OCI-LY7 (cell line): ENCODE measurements at regions of chr6 and their contacts with region 1.

Region 1: DNA sequence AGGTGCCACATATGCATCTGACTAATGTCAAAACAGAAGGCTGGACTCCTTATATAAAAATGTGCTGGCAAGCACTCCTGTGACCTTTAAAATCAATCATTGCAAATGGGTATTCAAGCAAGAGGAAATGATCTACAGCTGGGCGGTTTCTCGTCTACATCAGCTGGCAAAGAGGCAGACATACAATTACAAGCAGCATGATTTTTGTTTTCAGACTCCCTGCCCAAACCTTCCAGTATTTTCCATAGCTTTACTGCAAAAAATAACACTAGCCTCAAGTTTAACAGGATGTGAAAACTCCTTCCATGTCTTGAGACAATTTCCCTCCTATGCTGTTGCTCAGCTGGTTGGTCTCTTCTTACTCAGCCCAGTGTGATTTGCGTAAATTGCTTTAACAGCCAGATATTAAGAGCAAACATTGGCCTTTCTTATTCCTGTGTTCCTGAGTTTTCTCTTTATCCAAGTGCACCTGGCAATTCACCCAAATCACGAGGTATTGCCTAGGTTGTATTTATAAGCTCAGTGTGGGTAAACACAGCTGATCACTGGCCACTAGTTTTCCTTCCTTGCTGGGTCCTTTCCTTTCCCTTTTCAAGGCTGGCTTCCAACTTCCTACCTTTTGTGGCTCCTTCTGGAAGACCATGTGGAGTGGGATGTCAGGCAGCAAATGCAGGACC is 130.4 kb downstream of the MOXD1 start:
- DNase-seq: peak; percentile 61
- H3K4me3 ChIP-seq: peak overlapping the region; percentile 13
- H3K27ac ChIP-seq: peak overlapping the region; percentile 100
- H3K4me1 ChIP-seq: peaks cover 81% of the 10 kb centered on the region
- CTCF ChIP-seq: no peak

Region 2: DNA sequence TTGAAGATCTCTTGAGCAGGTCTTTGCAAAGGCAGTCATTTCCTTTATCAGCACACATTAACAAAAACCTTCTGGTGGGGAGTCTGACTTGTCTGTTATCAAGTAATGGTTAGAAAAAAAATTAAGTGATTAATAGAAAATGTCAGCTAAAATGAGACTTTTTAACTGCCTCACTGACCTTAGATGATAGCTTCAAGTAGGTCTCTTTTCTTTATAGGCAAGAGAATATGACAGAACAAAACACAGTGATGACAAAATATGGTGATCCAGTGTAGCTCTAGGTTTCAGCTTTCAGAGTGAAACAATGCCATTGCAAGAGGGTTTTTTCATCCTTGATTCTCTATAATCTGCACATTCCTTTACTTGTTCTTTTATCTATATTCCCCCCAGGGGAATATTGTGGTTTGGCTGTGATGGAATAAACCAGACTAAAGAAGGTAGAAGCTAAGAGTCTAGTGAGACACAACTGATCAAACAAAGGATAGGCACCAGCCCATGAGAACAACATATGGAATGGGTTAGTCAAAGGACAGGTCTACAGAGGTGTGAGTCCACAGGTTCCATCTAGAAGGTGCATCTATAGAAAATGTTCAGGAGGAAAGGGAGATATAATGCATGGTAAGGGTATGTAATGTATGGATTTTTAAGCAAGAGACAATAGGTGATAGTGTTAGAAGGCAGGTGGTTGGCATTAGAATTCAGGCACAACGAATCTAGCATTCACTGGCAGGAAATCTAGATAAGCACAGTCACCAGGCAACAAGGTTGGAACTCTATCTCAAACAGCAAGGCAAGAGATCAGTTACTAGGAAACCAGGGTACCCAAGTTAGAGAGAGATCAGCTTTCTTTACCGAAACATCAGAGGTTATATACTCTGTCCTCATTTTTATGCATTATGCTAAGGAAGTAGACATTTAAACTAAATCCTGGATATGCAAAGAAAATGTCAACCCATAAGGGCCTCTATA is 1672.6 kb before region 1 on chr6:
- CTCF ChIA-PET with region 1: no interaction called
- POLR2A ChIA-PET with region 1: no interaction called
- intact Hi-C with region 1: no loop called
- DNase-seq: no peak
- H3K4me3 ChIP-seq: no peak overlapping the region
- H3K27ac ChIP-seq: no peak overlapping the region
- H3K4me1 ChIP-seq: no peaks in the 10 kb centered on the region
- CTCF ChIP-seq: no peak

Region 3: GRCh38 chr6:132096245-132096644 is 174.6 kb before region 1 on chr6:
- CTCF ChIA-PET with region 1: no interaction called
- POLR2A ChIA-PET with region 1: no interaction called
- intact Hi-C with region 1: no loop called
- DNase-seq: no peak
- H3K4me3 ChIP-seq: no peak overlapping the region
- H3K27ac ChIP-seq: no peak overlapping the region
- H3K4me1 ChIP-seq: no peaks in the 10 kb centered on the region
- CTCF ChIP-seq: no peak

Region 4: GRCh38 chr6:132247381-132248159 is 23.3 kb before region 1 on chr6:
- CTCF ChIA-PET with region 1: no interaction called
- POLR2A ChIA-PET with region 1: interaction called, 16 read pairs
- intact Hi-C with region 1: no loop called
- DNase-seq: no peak
- H3K4me3 ChIP-seq: no peak overlapping the region
- H3K27ac ChIP-seq: no peak overlapping the region
- H3K4me1 ChIP-seq: no peaks in the 10 kb centered on the region
- CTCF ChIP-seq: no peak

Region 5: DNA sequence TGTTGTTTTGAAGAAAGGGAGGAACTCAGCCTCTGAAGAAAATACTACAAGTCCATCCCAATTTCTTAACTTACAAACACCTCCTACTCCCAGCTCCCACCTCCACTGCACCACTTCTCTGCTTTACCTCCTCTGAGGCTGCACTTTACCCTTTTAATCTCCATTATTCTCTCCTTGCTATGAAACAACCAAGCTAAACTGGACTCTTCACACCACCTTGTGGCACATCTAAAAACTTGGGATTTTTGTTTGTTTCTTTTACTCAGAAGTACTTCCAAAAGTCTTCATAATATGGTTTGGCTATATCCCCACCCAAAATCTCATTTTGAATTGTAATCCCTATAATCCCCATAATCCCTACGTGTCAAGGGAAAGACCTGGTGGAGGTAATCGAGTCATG is 11.8 kb before region 1 on chr6:
- CTCF ChIA-PET with region 1: interaction called, 3 read pairs
- POLR2A ChIA-PET with region 1: interaction called, 37 read pairs
- intact Hi-C with region 1: no loop called
- DNase-seq: peak; percentile 45
- H3K4me3 ChIP-seq: no peak overlapping the region
- H3K27ac ChIP-seq: no peak overlapping the region
- H3K4me1 ChIP-seq: peaks cover 7% of the 10 kb centered on the region
- CTCF ChIP-seq: peak; percentile 76

Region 6: GRCh38 chr6:132498638-132499037 is 227.8 kb after region 1 on chr6:
- CTCF ChIA-PET with region 1: interaction called, 4 read pairs
- POLR2A ChIA-PET with region 1: interaction called, 58 read pairs
- intact Hi-C with region 1: loop called (anchors 2 kb)
- DNase-seq: peak; percentile 81
- H3K4me3 ChIP-seq: peak overlapping the region; percentile 24
- H3K27ac ChIP-seq: peak overlapping the region; percentile 100
- H3K4me1 ChIP-seq: peaks cover 90% of the 10 kb centered on the region
- CTCF ChIP-seq: no peak